ENCODE measurements at regions of chr21 and their contacts with region 1.

Region 1: DNA sequence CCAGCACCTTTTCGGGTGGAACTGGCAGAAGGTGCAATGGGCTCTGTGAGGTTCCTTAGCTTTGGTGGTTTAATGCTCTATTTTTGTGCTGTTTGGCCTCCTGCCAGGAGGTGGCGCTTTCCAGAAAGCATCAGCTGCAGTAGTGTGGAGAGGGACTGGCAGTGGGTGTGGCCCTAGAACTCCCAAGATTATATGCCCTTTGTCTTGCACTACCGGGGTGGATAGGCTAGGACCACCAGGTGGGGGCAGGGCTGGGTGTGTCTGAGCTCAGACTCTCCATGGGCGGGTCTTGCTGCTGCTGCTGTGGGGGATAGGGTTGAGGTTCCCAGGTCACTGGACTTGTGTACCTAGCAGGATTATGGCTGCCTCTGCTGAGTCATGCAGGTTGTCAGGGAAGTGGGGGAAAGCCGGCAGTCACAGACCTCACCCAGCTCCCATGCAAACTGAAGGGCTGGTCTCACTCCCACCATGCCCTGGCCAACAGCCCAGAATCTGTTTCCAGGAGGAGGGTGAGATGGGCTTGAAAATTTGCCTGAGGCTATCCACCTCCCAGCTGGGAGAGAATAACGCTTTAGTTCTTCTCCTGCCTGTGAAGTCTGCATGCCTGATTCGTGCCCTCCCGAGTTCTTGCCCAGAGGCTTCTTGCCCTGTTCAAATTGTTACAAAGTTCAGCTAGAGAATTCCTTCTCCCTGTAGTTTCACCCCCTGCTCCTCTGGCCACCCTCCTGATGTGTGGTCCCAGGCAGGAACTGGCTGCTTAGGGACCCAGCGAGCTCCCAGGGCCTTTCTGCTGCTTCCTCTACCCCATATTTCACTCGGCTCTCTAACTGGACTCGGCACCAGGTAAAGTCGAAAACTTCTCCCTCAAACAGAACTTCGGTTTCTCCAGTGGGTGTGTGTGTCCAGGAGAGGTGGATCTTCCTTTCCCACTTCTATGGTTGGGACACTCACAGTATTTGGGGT is 76.5 kb upstream of the BTG3 start:
- DNase-seq: peak; percentile 59 to 71
- H3K4me3 ChIP-seq: peak overlapping the region in 1 of 3 donors; percentile 39
- H3K27ac ChIP-seq: peak overlapping the region; percentile 73 to 90
- H3K4me1 ChIP-seq: peaks cover 0 to 4% of the 10 kb centered on the region in 2 donors
- H3K27me3 ChIP-seq: no peaks in the 10 kb centered on the region
- CTCF ChIP-seq: no peak
- POLR2A ChIP-seq: no peak

Region 2: GRCh38 chr21:17925000-17925610 is 235.9 kb after region 1 on chr21:
- intact Hi-C with region 1: loop called (anchors 10 kb)
- DNase-seq: no peak
- H3K4me3 ChIP-seq: no peak overlapping the region
- H3K27ac ChIP-seq: no peak overlapping the region
- H3K4me1 ChIP-seq: no peaks in the 10 kb centered on the region
- H3K27me3 ChIP-seq: no peaks in the 10 kb centered on the region
- CTCF ChIP-seq: peak; percentile 34 to 68 (median 64)
- POLR2A ChIP-seq: no peak

Measured in breast epithelium (tissue), 4 donors.